ENCODE measurements at regions of chr12 and their contacts with region 1.

Region 1: GRCh38 chr12:121334513-121335343 is 17.5 kb downstream of the ANAPC5 start:
- DNase-seq: peak in 1 of 2 experiments; percentile 46
- H3K4me3 ChIP-seq: no peak overlapping the region
- H3K27ac ChIP-seq: no peak overlapping the region
- H3K4me1 ChIP-seq: no peaks in the 10 kb centered on the region
- H3K27me3 ChIP-seq: no peaks in the 10 kb centered on the region
- CTCF ChIP-seq: peak; percentile 85

Region 2: GRCh38 chr12:121128970-121129810 is 205.5 kb before region 1 on chr12:
- CTCF ChIA-PET with region 1: no interaction called
- POLR2A ChIA-PET with region 1: no interaction called
- intact Hi-C with region 1: no loop called
- DNase-seq: no peak
- H3K4me3 ChIP-seq: no peak overlapping the region
- H3K27ac ChIP-seq: no peak overlapping the region
- H3K4me1 ChIP-seq: peaks cover 30% of the 10 kb centered on the region
- H3K27me3 ChIP-seq: no peaks in the 10 kb centered on the region
- CTCF ChIP-seq: no peak

Region 3: DNA sequence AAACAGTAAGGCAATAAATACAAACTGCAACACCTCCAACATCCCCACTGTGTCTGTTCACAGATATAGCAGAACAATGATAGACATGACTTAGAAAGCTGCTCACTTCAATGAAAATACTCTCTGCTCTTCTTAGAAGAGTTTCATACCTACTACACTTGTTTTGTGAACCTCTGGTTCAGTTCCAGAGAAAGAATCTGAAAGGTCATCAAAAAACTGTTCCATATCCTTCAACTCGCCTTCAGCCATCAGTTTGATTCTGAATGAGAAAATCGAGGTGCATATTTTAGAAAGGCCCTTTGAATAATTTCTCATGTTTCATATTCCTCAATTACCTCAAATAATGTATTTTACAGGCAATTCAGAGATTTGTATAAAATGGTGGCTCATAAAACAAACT is 12.0 kb after region 1 on chr12:
- CTCF ChIA-PET with region 1: interaction called, 11 read pairs
- POLR2A ChIA-PET with region 1: no interaction called
- intact Hi-C with region 1: no loop called
- DNase-seq: no peak
- H3K4me3 ChIP-seq: no peak overlapping the region
- H3K27ac ChIP-seq: no peak overlapping the region
- H3K4me1 ChIP-seq: peaks cover 8% of the 10 kb centered on the region
- H3K27me3 ChIP-seq: no peaks in the 10 kb centered on the region
- CTCF ChIP-seq: no peak

Region 4: DNA sequence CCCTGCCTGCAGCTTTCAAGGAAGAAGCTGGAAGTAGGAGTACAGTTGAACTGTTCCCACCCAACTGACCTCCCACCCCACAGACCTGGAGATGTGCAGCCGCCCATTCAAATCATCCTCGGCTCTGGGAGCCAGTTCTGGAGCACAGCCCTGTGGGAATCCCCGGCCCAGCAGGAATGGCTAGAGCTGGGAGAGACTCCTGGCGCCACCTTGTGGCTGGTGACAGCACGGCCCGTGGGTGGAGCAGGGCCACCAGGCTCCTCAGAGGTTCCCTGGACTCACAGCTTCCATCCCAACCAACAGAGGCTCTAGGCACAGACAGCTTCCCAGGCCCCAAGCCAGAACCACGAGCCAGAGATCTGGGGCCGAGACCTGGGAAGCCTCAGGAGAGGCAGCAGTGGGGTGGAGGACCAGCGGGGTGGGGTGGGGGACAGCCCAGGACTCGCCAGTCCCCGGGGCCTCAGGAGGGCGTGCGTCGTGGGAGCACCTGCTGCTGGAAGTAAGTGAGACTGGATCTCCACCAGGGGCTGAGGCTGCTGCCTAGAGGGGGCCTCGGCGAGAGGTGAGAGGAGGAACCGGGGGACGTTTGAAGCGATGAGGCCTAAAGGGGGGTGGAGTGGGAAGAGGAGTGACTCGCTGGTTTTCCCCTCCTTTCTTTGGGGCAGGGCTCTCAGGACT is 108.6 kb after region 1 on chr12:
- CTCF ChIA-PET with region 1: no interaction called
- POLR2A ChIA-PET with region 1: no interaction called
- intact Hi-C with region 1: loop called (anchors 1 kb)
- DNase-seq: peak; percentile 42 to 79
- H3K4me3 ChIP-seq: no peak overlapping the region
- H3K27ac ChIP-seq: no peak overlapping the region
- H3K4me1 ChIP-seq: no peaks in the 10 kb centered on the region
- H3K27me3 ChIP-seq: no peaks in the 10 kb centered on the region
- CTCF ChIP-seq: peak; percentile 88

Region 5: DNA sequence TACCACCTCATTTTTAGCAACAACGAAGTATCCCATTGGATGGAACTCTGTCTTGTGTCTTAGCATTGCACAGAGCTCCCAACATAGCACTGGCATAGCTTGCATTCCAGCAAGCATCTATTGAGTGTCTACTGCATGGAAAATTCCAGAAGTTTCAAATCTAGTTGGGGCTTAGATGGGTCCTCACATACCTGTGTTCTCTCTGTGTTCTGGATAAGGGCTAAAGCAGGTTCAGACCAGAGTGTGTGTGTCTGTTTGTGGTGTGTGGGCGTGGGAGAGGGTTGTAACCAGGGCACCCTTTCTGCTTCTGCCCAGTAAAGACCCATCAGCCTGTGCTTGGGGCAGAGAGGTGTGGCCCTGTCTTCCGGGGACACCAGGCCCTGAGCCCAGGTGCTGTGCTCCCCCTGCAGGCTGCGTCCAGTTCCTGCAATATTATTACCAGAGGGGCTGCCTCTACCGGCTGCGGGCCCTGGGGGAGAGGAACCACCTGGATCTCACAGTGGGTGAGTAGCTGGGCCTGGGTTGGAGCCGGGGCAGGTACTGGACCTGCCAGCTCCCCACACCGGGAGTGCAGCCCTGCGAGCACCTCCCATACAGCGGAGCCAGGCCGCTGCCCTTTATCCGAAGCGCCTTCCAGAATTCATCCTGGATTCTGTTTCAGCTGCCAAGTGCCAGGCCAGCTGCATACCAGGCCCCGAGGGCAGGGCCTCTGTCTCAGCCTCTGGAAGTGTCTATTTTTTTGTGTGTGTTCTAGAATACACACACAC is 438.5 kb after region 1 on chr12:
- CTCF ChIA-PET with region 1: no interaction called
- POLR2A ChIA-PET with region 1: no interaction called
- intact Hi-C with region 1: no loop called
- DNase-seq: peak; percentile 70 to 80
- H3K4me3 ChIP-seq: no peak overlapping the region
- H3K27ac ChIP-seq: no peak overlapping the region
- H3K4me1 ChIP-seq: peaks cover 20% of the 10 kb centered on the region
- H3K27me3 ChIP-seq: no peaks in the 10 kb centered on the region
- CTCF ChIP-seq: peak; percentile 86

Measured in PC-9 (cell line).